Right ventricle myocardium superior (tissue), 1 donor: ENCODE measurements at regions of chr4 and their contacts with region 1.

Region 1: DNA sequence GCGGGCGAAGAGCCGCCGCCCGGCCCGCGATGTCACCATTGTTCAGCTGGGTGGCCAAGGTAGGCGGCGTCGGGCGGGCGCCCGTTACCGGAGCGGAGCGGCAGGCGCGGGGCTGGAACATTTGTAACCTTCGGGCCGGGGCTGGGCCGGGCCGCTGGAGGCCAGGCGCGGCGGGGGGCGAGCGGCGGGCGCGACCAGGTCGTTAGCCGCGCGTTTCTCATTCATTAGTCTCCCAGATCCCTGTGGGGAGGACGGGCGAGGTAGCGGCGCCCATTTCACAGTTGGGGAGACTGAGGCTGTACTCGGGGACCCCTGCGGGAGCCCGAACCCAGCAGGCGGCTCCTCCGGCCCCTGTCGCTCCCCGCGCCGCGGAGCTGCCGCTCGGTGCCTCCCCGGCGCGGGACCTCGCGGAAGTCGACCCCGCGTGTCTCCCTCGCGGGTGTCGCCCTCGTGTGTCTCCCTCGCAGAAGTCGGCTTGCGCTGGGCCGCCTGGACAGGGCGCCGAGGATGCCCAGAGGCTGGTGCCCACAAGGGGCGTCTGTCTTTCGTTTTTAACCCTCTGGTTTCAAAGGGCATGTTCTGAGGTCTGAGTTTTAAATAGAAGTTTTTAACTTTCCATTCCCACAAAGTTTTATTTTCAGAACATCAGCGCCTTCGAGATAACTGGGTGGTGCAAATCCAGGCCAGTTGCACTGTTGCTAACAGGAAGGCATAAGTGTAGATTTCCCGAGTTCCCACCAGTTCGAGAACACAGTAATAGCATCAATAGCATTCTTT is 17.5 kb downstream of the PTTG2 start:
- DNase-seq: peak; percentile 88
- ATAC-seq: peak; percentile 88

Region 2: DNA sequence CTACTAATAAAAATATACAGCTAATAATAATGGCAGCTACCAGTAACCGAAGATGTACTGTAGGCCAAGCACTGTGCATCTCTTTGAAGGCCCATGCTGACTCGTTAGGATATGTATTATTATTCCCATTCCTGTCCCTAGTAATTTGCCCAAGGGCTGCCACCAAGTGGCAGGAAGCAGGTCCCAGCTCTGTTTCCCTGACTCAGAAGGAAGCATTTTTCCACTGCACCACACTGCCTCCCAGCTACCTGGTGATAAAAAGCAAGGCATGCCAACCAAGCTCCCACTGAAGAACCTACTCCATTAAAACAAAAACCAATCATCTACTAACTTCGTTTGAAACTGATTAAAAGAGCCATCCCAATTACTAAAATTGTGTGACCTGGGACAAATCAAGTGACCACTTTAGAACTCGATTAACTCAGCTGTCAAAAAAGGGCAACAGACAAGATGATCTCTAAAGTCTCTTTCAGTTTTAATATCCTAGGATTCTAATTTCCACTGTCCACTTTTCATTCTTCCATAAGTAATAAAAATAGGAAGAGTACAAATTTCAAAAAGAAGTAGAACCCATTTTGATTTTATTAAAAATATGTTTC is 175.5 kb before region 1 on chr4:
- intact Hi-C with region 1: loop called (anchors 10 kb)
- DNase-seq: no peak
- ATAC-seq: peak; percentile 90

Region 3: DNA sequence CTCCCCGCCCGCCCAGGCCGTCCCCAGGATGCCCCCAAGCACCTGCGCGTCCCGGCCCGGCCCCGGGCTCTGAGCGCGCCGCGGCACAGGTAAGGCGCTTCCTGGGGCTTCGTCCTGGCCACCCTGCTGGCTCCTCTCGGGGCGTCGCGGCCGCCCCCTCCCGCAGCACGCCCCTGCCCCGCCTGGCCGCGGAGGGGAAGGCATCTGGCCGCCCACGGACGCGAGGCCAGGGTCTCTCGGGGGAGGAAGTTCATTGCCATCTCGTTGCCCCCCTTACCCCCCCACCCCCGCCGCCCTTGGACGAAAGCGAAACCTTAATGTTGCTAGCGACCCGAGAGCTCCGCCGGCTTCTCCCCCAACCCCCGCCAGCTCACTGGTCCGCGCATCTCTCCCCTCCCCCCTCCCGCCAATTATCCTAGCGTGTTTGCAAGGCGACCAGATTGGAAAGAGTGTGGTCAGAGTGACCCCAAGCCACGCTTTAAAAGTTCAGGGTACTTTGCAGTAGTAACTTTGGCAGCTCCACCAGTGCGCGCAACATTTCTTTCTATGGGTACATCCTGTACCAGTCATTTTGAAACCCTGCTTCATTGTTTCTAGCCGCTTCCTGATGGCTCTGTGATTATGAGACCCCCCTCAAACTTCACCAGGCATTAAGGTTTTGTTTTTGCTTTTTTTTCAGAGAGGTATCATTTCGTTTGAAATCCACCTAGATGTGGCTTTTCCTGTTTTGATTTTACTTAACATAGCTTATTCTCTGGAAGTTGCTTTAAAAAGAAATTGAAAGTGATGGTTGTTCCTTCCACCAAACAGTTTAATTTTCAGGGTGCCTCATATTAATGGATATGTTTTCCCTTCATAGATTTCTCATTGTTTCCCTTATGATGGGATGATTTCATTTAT is 86.1 kb before region 1 on chr4:
- intact Hi-C with region 1: loop called (anchors 10 kb)
- DNase-seq: peak; percentile 50
- ATAC-seq: peak; percentile 35

Region 4: GRCh38 chr4:38026238-38026637 is 48.6 kb after region 1 on chr4:
- intact Hi-C with region 1: loop called (anchors 5 kb)
- DNase-seq: no peak
- ATAC-seq: peak; percentile 26